ENCODE measurements at regions of chr2 and their contacts with region 1.

Region 1: GRCh38 chr2:217382794-217383193 is 522.9 kb upstream of the TNP1 start:
- DNase-seq: no peak

Region 2: DNA sequence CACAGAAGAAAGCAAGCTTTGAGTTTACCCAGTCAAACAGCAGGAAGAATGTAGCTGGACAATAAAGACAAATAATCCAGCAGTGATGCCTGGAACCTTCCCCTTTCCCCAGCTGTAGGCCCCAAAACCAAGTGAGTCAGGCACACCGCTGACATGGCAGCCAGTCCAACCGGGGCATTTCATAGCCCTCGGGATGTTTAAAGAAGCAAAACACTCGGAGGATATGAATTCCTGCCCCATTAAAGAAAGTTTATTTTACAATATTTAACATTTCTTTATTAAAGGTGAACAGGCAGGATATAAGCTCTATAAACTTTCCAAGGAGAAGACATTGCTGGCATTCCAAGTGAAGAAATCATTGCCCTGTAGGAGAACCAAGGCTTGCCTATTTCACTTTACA is 15.3 kb before region 1 on chr2:
- intact Hi-C with region 1: loop called (anchors 1 kb)
- DNase-seq: no peak

Region 3: DNA sequence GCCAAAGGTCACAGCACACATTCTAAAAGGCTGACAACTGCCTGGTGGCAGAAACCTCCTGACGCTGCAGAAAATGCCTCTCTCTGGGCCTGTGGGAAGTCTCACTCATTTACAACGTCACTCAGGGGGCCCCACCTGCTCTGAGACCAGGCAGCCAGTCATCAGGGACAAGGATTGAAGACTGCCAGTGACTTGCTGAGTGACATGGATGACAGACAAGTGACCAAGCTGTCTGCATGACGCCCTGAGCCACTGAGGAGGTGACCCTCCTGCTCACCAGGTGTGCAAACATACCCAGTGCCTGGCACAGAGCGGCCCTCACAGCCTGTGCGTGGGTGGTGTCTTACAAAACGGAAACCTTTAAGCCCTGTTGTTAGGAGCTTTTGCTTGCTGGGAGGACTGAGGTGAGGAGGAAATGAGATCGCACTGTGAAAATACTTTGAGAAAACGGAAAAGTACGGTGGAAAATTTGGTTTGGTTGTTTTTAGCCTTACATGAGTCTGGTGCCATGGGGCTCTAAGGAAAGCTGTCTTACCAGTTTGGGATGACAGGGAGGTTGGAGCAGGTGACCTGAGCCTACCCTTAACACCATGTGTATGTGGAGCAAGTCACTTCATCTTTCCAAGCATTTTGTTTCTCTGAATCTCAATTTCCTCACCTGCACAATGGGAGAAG is 227.7 kb after region 1 on chr2:
- intact Hi-C with region 1: no loop called
- DNase-seq: no peak

Measured in cardiac septum (tissue), 1 donor.